GM23248 (cell line): ENCODE measurements at regions of chr11 and their contacts with region 1.

Region 1: GRCh38 chr11:30917859-30918478 is 331.8 kb upstream of the MPPED2 start:
- DNase-seq: peak; percentile 67
- H3K4me3 ChIP-seq: no peak overlapping the region
- H3K27ac ChIP-seq: no peak overlapping the region
- H3K4me1 ChIP-seq: peaks cover 11% of the 10 kb centered on the region; the same call in 1 of the 2 replicates
- H3K27me3 ChIP-seq: 0 out of 2 replicates have a peak, but pooled peaks cover 5% of the 10 kb centered on the region

Region 2: GRCh38 chr11:29432719-29433325 is 1485.1 kb before region 1 on chr11:
- in situ Hi-C with region 1: loop called (anchors 25 kb)
- DNase-seq: peak; percentile 43
- H3K4me3 ChIP-seq: no peak overlapping the region
- H3K27ac ChIP-seq: no peak overlapping the region
- H3K4me1 ChIP-seq: no peaks in the 10 kb centered on the region
- H3K27me3 ChIP-seq: no peaks in the 10 kb centered on the region

Region 3: DNA sequence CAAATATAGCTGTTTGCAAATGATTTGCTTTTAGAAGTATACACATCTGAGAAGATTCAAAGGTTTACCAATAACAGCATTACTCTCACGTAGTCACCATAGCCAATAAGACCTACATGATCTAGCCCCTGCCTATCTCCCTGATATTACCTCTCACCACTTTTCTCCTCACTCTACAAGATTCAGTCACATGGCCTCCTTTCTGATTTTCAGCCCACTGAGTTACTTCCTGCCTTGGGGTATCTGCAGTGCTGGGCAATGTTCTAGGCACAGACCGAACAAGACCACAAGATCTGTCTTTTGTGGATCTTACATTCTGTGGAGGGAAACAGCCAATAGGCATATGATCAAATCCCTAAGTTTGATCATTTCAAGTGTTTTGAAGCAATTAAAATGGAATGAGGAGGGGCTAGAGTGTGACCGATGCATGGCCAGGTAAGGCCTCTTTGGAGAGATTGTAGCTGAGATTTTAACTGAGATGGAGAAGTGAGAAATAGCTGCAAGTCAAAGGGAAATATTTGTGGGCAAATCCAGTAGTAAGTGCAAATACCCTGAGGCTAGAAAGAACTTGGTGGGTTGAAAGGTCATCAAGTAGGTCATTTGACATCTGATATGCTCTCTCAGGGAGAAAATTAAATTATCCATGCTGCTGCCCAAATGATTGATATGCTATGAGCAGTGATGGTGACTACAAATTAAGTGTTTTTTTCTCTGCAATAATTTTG is 552.0 kb before region 1 on chr11:
- in situ Hi-C with region 1: loop called (anchors 25 kb)
- DNase-seq: no peak
- H3K4me3 ChIP-seq: no peak overlapping the region
- H3K27ac ChIP-seq: no peak overlapping the region
- H3K4me1 ChIP-seq: no peaks in the 10 kb centered on the region
- H3K27me3 ChIP-seq: 0 out of 2 replicates have a peak, but pooled peaks cover 7% of the 10 kb centered on the region